Right ventricle myocardium inferior (tissue), 1 donor: ENCODE measurements at regions of chr18 and their contacts with region 1.

Region 1: GRCh38 chr18:27057519-27058234 is 127.4 kb downstream of the CHST9 start:
- DNase-seq: no peak
- ATAC-seq: peak; percentile 94

Region 2: GRCh38 chr18:27005589-27005988 is 52.1 kb before region 1 on chr18:
- intact Hi-C with region 1: no loop called
- DNase-seq: no peak
- ATAC-seq: no peak

Region 3: GRCh38 chr18:27143580-27144287 is 86.1 kb after region 1 on chr18:
- intact Hi-C with region 1: loop called (anchors 2 kb)
- DNase-seq: peak; percentile 77
- ATAC-seq: peak; percentile 95

Region 4: DNA sequence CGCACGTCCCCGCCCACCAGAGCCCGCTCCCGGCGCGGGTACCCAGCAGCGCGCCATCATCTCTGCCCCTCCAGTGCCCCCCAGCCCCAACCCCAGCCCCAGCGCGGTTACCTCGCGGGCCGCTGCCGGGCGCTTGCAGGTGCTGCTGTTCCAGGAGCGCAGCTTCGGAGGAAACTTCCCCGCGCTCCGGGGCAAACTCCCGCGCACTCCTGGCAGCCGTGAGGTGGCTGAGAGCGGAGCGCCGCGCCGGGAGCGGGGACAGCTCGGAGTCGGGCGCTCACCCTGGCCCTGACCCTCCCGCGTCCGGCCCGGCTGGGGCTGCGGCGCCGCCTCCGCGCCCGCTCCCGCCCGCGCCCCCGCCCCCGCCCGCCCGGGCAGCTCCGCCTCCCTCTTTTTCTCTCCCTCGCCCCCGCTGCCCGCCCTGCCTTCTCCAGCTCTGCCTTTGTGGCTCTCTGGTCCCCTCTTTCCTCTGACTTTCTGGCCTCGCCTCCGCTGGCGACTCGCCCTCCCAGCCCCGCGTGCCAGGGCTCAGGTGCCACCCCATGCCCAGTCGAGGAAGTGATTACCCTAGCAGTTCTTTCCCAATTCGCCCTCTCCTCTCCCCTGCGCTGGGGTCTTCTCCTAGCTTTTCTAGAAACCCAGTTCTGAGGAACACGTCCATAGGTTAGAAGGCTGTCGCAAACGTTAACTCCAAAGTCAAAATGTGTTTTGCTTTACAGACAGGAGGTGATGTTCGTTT is 127.5 kb after region 1 on chr18 and contains the start of gene CHST9:
- intact Hi-C with region 1: loop called (anchors 5 kb)
- DNase-seq: peak; percentile 59
- ATAC-seq: peak; percentile 86
- total RNA-seq, gene CHST9: 8.3 TPM